GM10248 (cell line): ENCODE measurements at regions of chr10 and their contacts with region 1.

Region 1: DNA sequence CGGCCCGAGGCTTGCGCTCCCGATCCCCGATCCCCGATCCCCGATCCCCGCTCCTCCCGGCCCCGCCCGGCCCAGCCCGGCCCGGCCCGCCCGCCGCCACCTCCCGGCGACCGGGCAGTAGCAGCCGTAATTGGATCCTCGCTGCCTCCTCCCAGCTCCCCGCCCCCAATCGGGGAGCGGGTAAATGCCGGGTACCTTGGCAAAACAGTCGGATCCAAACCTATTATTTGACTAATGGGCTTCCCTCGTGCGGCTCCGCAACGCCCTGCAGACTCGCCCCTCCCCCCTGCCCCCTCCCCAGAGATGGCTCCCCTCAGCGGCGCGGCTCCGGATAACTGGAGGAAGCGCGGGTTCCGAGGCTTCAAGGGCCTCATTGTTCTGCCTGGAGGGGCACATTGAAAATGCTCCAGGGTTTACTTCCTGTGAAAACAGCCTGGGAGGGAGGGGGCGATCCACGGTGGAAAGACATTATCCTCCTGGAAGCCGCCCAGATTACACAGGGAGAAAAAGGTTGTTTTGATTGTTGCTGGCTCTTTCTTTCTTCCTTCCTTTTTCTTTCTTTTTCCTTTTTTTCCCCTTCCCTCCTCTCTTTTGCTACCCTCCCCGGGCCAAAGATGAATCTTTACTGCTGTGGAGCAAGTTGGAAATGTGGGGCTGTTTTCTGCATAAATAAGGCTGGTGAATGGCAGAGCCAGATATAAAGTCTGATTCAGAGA is 94.7 kb upstream of the ZMIZ1 start:
- DNase-seq: no peak
- CTCF ChIP-seq: no peak

Region 2: DNA sequence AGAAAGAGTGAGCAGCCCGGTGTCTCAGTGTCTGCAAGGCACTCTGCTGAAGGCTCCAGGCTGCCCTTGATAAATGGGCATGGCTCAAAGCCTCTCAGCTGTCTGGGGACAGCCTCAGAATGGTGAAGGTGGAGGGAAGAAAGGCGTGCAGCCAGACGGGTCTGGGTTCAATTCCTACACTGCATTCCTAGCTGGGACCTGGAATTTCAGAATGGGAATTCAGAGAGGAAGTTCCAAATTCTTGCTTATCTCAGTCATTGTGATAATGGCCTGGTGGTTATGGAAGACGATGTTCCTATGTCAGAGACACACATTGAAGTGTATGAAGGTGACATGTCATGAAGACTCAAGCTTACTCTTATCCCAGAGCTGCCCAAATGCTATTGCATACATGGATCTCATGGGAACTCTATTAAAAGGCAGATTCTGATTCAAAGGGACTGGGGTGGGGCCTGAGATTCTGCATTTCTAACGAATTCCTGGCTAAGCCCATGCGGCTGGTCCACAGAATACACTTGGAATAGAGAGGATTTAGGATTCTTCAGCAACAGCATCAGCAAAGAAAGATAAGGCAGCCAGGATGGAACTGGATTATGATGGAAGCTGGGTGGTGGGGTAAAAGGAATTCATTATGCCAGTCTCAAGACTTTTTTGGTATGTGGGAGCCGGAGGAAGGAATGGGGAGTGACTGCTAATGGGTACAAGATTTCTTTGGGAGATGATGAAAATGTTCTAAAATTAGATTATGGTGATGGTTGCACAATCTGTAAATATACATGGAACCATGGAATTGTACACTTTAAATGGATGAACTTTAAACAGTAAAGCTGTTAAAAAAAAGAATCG is 12.1 kb after region 1 on chr10:
- CTCF ChIA-PET with region 1: interaction called, 24 read pairs
- POLR2A ChIA-PET with region 1: no interaction called
- DNase-seq: no peak
- CTCF ChIP-seq: no peak

Region 3: DNA sequence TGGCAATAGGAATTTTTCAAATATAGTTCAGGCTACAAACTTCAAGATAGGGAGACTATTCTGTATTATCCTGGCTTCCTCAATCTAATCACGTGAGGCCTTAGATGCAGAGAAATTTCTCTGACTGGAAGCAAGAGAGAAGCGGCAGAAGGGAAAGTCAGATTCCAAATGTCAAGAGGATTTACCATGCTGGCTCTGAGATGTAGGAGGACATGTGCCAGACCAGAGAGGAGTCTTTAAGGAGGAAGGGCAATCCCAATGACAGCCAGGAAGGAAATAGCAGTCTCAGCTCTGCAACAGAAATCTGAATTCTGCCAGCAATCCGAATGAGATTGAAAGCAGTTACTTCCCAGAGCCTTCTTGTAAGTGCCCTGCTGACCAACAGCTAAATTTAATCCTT is 909.9 kb after region 1 on chr10:
- CTCF ChIA-PET with region 1: no interaction called
- POLR2A ChIA-PET with region 1: no interaction called
- DNase-seq: no peak
- CTCF ChIP-seq: no peak